Heart right ventricle (tissue), 16 donors: ENCODE measurements at regions of chr10 and their contacts with region 1.

Region 1: DNA sequence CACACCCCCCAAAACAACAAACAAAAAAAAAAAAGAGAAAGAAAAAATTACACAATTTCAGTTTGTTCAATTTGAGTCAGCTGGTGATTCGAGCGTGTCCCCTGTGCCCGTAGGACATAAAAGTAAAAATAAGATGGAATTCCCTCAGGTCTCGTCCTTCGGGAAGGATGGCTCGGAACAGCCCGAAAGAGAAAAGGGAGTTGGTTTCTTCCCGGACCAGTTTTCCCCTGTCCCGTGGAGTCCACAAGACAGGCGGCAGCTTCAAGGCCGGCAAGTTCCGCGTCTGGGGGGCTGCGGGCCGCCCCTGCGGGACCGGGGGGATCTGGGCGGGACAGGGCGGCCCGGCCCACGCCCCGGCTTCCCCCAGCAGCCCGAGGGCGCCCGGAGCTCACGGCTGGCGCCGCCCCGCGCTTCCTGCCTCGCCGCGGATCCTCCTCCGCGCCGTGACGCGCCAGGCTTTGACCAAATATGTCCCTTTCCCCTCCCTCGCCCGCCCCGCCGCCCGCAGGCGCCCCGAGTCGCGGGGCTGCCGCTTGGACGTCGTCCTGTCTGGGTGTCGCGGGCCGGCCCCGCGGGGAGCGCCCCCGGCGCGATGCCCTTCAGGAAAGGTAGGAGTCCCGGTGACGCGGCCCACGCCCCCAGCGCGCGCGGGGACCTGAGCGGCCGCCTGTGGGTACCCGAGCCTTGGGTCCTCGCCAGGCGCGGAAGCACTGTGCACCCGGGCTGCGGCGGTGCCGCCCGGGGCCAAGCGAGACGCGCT is 55.8 kb downstream of the RBM17 start:
- DNase-seq: peak; percentile 91 to 92
- ATAC-seq: peak; percentile 92 to 96 (median 94)
- H3K4me3 ChIP-seq: peak overlapping the region; percentile 61 to 94 (median 82)
- H3K27ac ChIP-seq: peak overlapping the region; percentile 30 to 98 (median 86)
- H3K4me1 ChIP-seq: peaks cover 0 to 82% (median 16%) of the 10 kb centered on the region in 9 donors
- H3K27me3 ChIP-seq: peaks cover 0 to 14% (median 0%) of the 10 kb centered on the region in 7 donors
- CTCF ChIP-seq: peak in 3 of 9 donors; percentile 30 to 40 (median 35)

Region 2: DNA sequence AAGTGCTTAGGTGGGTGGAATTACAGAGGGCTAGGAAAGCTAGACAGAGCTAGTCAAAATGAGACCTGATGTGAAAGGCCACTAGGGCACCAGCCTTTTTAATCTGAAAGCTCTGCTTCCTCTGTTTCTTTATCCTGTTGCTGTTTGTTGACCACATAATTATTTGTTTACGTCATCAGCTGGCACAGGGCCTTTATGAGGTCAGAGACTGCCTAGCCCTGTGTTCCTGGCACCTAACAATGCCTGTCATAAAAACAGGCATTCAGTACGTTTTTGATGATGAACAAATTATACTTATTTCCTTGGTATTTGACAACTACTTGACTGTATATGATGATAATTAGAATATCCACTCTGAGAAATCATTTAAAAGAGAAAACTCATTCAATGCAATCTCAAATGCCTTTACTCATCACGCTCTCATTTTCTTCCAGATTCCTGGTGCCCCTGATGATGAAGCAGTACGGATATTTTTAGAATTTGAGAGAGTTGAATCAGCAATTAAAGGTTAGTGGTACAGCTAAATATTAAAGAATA is 29.7 kb before region 1 on chr10:
- intact Hi-C with region 1: loop called in 6 of 10 experiments (anchors 5 kb)
- DNase-seq: peak in 1 of 2 donors; percentile 32
- ATAC-seq: peak in 3 of 8 donors; percentile 42 to 65 (median 56)
- H3K4me3 ChIP-seq: no peak overlapping the region
- H3K27ac ChIP-seq: peak overlapping the region in 9 of 10 donors; percentile 26 to 73 (median 55)
- H3K4me1 ChIP-seq: peaks cover 0 to 39% (median 26%) of the 10 kb centered on the region in 9 donors
- H3K27me3 ChIP-seq: no peaks in the 10 kb centered on the region
- CTCF ChIP-seq: no peak